Thyroid gland (tissue), 4 donors: ENCODE measurements at regions of chr11 and their contacts with region 1.

Region 1: GRCh38 chr11:36478700-36479329 is 31.3 kb downstream of the TRAF6 start:
- DNase-seq: no peak
- H3K4me3 ChIP-seq: no peak overlapping the region
- H3K27ac ChIP-seq: no peak overlapping the region
- H3K4me1 ChIP-seq: no peaks in the 10 kb centered on the region
- H3K27me3 ChIP-seq: no peaks in the 10 kb centered on the region
- CTCF ChIP-seq: peak in 3 of 6 experiments; percentile 9 to 38 (median 32)
- POLR2A ChIP-seq: no peak

Region 2: GRCh38 chr11:36306888-36307287 is 171.9 kb before region 1 on chr11:
- intact Hi-C with region 1: loop called (anchors 10 kb)
- DNase-seq: no peak
- H3K4me3 ChIP-seq: no peak overlapping the region
- H3K27ac ChIP-seq: no peak overlapping the region
- H3K4me1 ChIP-seq: no peaks in the 10 kb centered on the region
- H3K27me3 ChIP-seq: no peaks in the 10 kb centered on the region
- CTCF ChIP-seq: peak in 2 of 6 experiments; percentile 17 to 24
- POLR2A ChIP-seq: no peak